ENCODE measurements at regions of chr3 and their contacts with region 1.

Region 1: GRCh38 chr3:186821429-186822367 is 15.4 kb upstream of the RFC4 start:
- DNase-seq: peak; percentile 61
- H3K4me3 ChIP-seq: peak overlapping the region in 2 of 3 experiments; percentile 21 to 58
- H3K27ac ChIP-seq: no peak overlapping the region
- H3K4me1 ChIP-seq: peaks cover 9% of the 10 kb centered on the region
- H3K27me3 ChIP-seq: no peaks in the 10 kb centered on the region
- CTCF ChIP-seq: peak; percentile 52 to 63
- POLR2A ChIP-seq: no peak

Region 2: GRCh38 chr3:186259612-186260383 is 561.9 kb before region 1 on chr3:
- CTCF ChIA-PET with region 1: interaction called, 7 read pairs
- POLR2A ChIA-PET with region 1: no interaction called
- dilution Hi-C with region 1: no loop called
- intact Hi-C with region 1: loop called (anchors 5 kb)
- DNase-seq: peak; percentile 58
- H3K4me3 ChIP-seq: no peak overlapping the region
- H3K27ac ChIP-seq: no peak overlapping the region
- H3K4me1 ChIP-seq: no peaks in the 10 kb centered on the region
- H3K27me3 ChIP-seq: no peaks in the 10 kb centered on the region
- CTCF ChIP-seq: peak; percentile 87 to 98
- POLR2A ChIP-seq: no peak

Region 3: GRCh38 chr3:186609247-186609868 is 212.3 kb before region 1 on chr3:
- CTCF ChIA-PET with region 1: interaction called, 195 read pairs
- POLR2A ChIA-PET with region 1: no interaction called
- dilution Hi-C with region 1: no loop called
- intact Hi-C with region 1: no loop called
- DNase-seq: no peak
- H3K4me3 ChIP-seq: no peak overlapping the region
- H3K27ac ChIP-seq: no peak overlapping the region
- H3K4me1 ChIP-seq: peaks cover 1% of the 10 kb centered on the region
- H3K27me3 ChIP-seq: peaks cover 3 to 5% of the 10 kb centered on the region in 2 experiments
- CTCF ChIP-seq: no peak
- POLR2A ChIP-seq: no peak

Region 4: DNA sequence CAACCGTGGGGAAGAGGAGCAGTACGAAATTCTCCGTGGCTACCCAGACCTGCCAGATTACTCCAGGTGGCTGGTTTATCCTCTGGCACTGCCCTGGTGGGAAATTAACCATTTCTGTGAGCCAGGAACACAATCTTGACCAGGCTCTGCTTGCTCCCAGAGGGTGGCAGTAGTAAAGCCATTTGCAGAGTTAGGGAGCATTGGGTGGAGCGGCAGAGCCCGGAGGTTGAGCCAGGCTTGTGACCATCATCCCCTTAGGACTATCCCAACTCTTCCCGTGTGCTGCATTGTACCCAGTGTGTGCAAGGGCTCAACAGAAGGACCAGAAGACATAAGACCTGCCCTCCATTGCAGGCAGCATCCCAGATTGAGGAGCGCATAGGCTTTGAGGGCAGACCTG is 99.2 kb before region 1 on chr3:
- CTCF ChIA-PET with region 1: interaction called, 33 read pairs
- POLR2A ChIA-PET with region 1: no interaction called
- dilution Hi-C with region 1: no loop called
- intact Hi-C with region 1: loop called (anchors 1 kb)
- DNase-seq: no peak
- H3K4me3 ChIP-seq: no peak overlapping the region
- H3K27ac ChIP-seq: no peak overlapping the region
- H3K4me1 ChIP-seq: no peaks in the 10 kb centered on the region
- H3K27me3 ChIP-seq: no peaks in the 10 kb centered on the region
- CTCF ChIP-seq: peak; percentile 5 to 20
- POLR2A ChIP-seq: no peak

Region 5: GRCh38 chr3:186790261-186790981 is 31.3 kb before region 1 on chr3:
- CTCF ChIA-PET with region 1: interaction called, 15 read pairs
- POLR2A ChIA-PET with region 1: interaction called, 3 read pairs
- dilution Hi-C with region 1: no loop called
- intact Hi-C with region 1: no loop called
- DNase-seq: peak; percentile 50
- H3K4me3 ChIP-seq: no peak overlapping the region
- H3K27ac ChIP-seq: no peak overlapping the region
- H3K4me1 ChIP-seq: peaks cover 22% of the 10 kb centered on the region
- H3K27me3 ChIP-seq: no peaks in the 10 kb centered on the region
- CTCF ChIP-seq: peak in 1 of 2 donors; percentile 4
- POLR2A ChIP-seq: peak; percentile 75

Region 6: GRCh38 chr3:186806089-186807055 is 15.3 kb before region 1 on chr3 and contains the start of gene RFC4:
- CTCF ChIA-PET with region 1: interaction called, 11 read pairs
- POLR2A ChIA-PET with region 1: no interaction called
- dilution Hi-C with region 1: no loop called
- intact Hi-C with region 1: no loop called
- DNase-seq: peak; percentile 75
- H3K4me3 ChIP-seq: peak within 1 kb of the TSS; percentile 29 to 85 (median 63)
- H3K27ac ChIP-seq: peak within 1 kb of the TSS; percentile 42
- H3K4me1 ChIP-seq: peaks cover 12% of the 10 kb centered on the region
- H3K27me3 ChIP-seq: no peaks in the 10 kb centered on the region
- CTCF ChIP-seq: no peak
- POLR2A ChIP-seq: peak; percentile 85
- total RNA-seq, gene RFC4: 29.1 and 33.7 TPM in 2 replicates